ENCODE measurements at regions of chr5 and their contacts with region 1.

Region 1: GRCh38 chr5:131382407-131383395 is 118.8 kb downstream of the CDC42SE2 start:
- DNase-seq: peak; percentile 72
- ATAC-seq: peak; percentile 77
- H3K4me3 Mint-ChIP-seq: peak overlapping the region; percentile 32
- H3K27ac Mint-ChIP-seq: peak overlapping the region; percentile 81
- H3K4me1 Mint-ChIP-seq: peaks cover 68% of the 10 kb centered on the region
- H3K27me3 Mint-ChIP-seq: no peaks in the 10 kb centered on the region

Region 2: GRCh38 chr5:131270809-131271208 is 111.9 kb before region 1 on chr5:
- CTCF ChIA-PET with region 1: interaction called, 43 read pairs
- POLR2A ChIA-PET with region 1: interaction called, 158 read pairs
- DNase-seq: no peak
- ATAC-seq: no peak
- H3K4me3 Mint-ChIP-seq: peak overlapping the region; percentile 73
- H3K27ac Mint-ChIP-seq: peak overlapping the region; percentile 80
- H3K4me1 Mint-ChIP-seq: peaks cover 74% of the 10 kb centered on the region
- H3K27me3 Mint-ChIP-seq: no peaks in the 10 kb centered on the region

Region 3: DNA sequence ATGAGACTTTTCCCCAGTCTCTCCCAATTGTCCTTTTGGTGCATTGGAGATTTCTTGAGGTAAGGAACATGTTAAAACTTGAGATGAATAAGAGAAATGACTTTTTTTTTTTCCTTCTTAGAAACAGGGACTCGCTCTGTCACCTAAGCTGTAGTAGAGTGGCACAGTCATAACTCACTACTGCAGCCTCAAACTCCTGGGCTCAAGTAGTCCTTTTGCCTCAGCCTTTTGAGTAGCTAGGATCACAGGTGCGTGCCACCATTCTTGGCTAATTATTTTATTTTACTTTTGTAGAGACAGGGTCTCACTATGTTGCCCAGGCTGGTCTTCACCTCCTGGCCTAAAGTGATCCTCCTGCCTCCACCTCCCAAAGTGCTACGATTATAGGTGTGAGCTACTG is 93.0 kb before region 1 on chr5:
- CTCF ChIA-PET with region 1: interaction called, 14 read pairs
- POLR2A ChIA-PET with region 1: interaction called, 10 read pairs
- DNase-seq: no peak
- ATAC-seq: peak; percentile 64
- H3K4me3 Mint-ChIP-seq: peak overlapping the region; percentile 77
- H3K27ac Mint-ChIP-seq: peak overlapping the region; percentile 88
- H3K4me1 Mint-ChIP-seq: peaks cover 72% of the 10 kb centered on the region
- H3K27me3 Mint-ChIP-seq: no peaks in the 10 kb centered on the region

Region 4: DNA sequence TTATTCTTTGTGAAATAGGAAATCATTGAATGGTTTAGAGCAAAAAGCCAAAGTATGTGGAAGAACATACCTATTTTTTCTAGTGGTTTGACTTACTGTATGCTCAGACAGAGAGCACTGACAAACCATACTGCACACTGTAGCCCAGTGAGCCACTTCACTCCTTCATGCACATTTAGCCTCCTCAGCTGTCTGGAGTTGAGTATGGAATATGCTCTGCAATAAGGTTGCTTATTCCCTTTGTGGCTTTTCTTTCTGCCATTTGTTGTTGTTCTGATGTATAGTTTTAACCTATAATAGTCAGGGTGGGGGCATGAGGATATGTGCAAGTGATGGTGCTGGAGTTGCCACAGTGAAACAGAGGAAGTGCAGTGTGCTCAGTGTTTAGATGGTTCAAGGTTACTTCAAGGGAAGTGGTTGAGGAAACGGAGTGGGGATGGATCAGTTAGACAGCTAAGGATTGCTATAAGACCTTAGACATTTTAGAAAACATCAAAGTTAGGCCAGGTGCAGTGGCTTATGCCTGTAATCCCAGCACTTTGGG is 18.1 kb before region 1 on chr5:
- CTCF ChIA-PET with region 1: interaction called, 10 read pairs
- POLR2A ChIA-PET with region 1: interaction called, 6 read pairs
- DNase-seq: peak; percentile 52
- ATAC-seq: peak; percentile 76
- H3K4me3 Mint-ChIP-seq: peak overlapping the region; percentile 26
- H3K27ac Mint-ChIP-seq: peak overlapping the region; percentile 81
- H3K4me1 Mint-ChIP-seq: peaks cover 63% of the 10 kb centered on the region
- H3K27me3 Mint-ChIP-seq: no peaks in the 10 kb centered on the region

Region 5: DNA sequence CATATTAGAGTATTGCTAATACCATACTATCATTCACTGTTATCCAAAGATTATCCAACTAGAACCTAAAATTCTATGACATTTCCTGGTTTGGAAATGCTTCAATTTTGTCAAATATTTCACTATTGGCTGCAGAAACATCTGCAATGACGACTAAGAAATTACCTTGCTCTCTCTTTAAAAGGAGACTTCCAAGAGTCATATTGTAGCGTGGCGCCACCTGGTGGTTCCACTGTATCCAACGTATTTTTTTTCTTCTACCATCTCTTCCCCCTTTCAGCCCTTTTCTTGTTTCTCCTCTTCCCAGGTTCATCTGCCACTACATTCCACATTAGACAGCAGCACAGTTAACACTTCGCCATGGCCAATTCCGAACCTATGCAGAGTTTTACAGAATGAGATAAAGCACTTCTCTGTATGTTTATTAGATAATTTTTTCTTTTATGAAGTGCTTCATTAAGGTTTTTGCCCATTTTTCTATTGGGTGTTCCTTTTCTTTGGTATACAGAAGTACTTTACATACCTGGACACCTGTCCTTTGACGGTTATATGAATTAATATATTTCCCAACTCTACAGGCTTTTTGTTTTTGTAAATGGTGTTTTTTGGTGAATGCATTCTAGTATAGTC is 34.7 kb after region 1 on chr5:
- CTCF ChIA-PET with region 1: interaction called, 17 read pairs
- POLR2A ChIA-PET with region 1: interaction called, 6 read pairs
- DNase-seq: peak; percentile 91
- ATAC-seq: peak; percentile 37
- H3K4me3 Mint-ChIP-seq: peak overlapping the region; percentile 62
- H3K27ac Mint-ChIP-seq: peak overlapping the region; percentile 57
- H3K4me1 Mint-ChIP-seq: peaks cover 41% of the 10 kb centered on the region
- H3K27me3 Mint-ChIP-seq: no peaks in the 10 kb centered on the region

Measured in activated CD8-positive, alpha-beta T cell treated with anti-CD3 and anti-CD28 coated beads, Interleukin-2, amount 10 ng/mL, durations not matched to agents 7 days and 5 days (primary cell).